RWPE1 (cell line): ENCODE measurements at regions of chr9 and their contacts with region 1.

Region 1: DNA sequence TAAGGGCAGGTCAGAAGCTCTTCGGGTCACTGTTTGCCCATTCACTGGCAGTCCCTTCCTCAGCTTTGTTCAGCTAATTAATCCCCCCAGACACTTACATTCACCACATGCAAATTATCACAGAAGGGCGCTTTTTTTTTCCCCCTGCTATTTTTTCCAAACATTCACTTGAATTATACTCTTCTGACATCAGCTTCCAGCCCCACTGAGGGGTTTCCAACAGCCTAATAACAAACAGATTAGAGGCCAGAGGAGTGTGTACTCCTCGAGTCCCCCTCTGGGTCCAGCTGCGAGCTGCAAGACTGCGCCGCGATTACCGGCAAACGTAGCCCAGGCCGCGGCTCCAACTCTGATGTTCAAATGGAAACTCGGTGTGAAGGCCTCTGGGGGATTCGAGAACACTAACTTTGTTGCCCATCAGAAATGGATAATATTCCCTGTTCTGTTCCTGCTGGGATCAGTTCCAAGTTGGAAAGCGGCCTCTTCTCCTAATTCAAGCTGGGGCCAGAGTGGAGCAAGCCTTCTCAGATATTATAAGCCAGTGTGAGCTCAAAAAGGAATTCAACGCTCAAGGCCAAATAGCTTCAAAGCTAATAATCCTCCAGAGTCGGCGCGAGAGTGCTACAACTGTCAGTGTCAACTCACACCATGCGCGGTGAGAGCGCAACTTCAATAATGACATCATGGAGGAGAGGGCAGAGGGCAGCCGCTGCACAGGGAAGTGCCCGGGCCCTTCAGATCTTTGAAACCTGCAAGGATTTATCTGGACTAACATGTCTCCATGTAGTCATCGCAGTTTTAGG is 560.8 kb downstream of the BNC2 start:
- DNase-seq: no peak
- H3K27ac ChIP-seq: no peak overlapping the region
- CTCF ChIP-seq: no peak

Region 2: DNA sequence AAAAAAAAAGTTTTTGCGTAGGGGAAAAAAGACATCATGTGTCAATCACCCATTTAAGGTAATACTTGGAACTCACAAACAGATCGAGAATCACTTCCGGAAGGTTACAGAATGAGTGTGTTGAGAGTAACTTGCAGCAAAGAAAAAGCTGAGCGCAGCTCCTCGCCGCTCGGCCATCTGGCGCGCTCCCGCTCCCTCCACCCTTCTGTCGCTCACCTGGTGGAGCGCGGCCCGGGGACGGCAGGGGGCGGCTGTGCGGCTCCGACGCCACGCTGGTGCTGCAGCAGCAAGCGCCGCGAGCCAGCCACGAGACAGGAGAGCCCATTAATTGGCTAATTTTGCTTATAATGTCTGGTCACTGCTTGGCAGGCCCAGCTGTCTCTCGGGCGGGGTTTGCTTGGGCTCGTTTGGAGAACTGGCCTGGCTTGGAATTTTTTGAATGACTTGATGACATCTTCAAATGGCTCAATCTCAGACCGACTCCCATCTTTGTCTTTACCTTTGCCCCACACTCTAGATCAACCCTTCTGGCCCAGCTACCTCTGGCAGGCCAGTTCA is 155.1 kb before region 1 on chr9:
- CTCF ChIA-PET with region 1: no interaction called
- POLR2A ChIA-PET with region 1: no interaction called
- DNase-seq: no peak
- H3K27ac ChIP-seq: no peak overlapping the region
- CTCF ChIP-seq: no peak

Region 3: DNA sequence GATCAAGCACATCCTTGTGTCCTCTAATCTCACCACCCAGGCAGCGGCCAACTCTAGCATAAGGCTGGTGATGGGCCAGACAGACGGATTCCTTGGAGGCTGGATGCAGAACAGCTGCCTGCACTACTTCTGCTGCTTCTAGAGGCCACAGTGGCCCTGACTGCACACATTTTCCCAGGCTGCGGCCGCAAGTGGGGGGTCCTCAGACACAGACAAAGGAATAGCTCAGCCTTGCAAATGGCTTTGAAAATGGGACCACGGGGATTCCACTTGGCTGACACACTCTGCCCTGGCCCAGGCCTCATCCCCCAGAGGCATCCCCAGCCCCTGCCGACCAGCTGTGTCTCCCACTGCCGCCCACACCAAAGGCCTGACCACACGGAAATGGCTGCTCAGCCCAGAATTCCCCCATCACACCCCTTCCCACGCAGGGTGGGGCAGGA is 20.0 kb after region 1 on chr9:
- CTCF ChIA-PET with region 1: no interaction called
- POLR2A ChIA-PET with region 1: interaction called, 10 read pairs
- DNase-seq: no peak
- H3K27ac ChIP-seq: no peak overlapping the region
- CTCF ChIP-seq: no peak